ENCODE measurements at regions of chr1 and their contacts with region 1.

Region 1: DNA sequence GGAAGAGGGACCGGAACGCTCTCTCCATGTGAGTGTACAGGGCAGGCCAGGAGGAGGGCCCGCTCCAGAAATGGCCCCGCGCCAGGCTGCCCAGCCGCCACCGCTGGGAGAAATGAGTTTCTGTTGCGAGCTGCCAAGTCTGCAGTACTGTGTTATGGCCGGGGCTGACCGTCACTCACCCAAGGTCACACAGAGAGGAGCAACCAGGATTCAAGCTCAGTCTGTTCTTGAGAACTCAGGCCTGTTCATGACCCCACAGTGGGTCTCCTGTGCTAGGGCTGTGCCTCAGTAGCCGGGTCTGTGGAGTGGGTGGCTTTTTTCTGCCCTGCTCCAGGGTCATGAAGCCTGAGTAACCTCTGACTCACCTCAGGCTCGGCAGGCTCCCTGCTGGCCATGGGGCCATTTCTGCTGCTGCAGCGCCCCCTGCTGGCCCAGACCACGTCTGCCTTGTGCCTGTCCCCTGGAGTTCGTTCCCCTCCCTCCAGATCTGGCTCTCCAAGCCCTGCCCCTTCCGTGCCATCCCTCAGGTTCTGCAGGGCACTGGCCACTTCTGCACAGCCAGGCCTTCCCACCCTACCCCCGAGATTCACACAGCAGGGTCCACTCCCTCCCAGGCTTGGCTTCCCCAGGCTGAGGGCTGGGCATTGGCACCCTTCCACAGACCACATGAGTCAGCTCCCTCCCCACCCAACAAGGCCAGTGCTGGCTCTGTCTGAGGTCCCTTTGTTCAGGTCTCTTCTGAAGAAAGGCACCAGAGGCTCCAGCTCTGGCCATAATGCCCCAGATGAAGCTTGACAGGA is 51.8 kb downstream of the EDN2 start:
- DNase-seq: peak; percentile 93 to 99
- H3K4me3 ChIP-seq: no peak overlapping the region
- H3K27ac ChIP-seq: peak overlapping the region; percentile 13; the same call in 1 of the 2 replicates
- H3K4me1 ChIP-seq: peaks cover 28% of the 10 kb centered on the region
- H3K27me3 ChIP-seq: no peaks in the 10 kb centered on the region
- CTCF ChIP-seq: peak; percentile 97

Region 2: DNA sequence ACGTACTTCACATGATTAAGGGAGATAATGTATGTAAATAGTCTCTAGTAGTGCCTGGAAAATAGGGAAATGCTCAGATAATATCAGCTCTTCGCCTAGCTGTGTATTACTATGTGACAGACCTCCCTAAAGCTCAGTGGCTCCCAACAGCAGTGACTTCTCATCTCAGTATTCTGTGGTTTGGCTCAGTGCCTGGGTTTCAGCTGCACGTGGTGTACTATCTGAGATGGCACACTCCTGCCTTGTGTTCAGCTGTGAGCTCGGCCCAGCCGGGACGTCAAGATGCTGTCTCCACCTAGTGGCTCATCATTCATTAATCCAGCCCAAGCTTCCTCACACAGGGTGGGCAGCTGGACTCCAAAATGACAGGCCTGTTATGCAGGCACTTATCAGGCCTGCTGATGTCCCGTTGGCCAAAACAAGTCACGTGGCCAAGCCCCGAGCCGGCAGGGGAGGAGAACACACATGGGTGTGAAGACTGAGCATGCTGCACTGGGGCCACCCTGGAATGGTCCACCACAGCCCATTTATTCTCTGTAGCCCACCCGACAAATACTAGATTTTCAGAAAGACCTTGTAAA is 429.0 kb before region 1 on chr1:
- CTCF ChIA-PET with region 1: no interaction called
- POLR2A ChIA-PET with region 1: no interaction called
- intact Hi-C with region 1: loop called (anchors 10 kb)
- DNase-seq: peak; percentile 93 to 96
- H3K4me3 ChIP-seq: no peak overlapping the region
- H3K27ac ChIP-seq: no peak overlapping the region
- H3K4me1 ChIP-seq: peaks cover 13% of the 10 kb centered on the region
- H3K27me3 ChIP-seq: no peaks in the 10 kb centered on the region
- CTCF ChIP-seq: peak; percentile 62

Region 3: GRCh38 chr1:41282679-41283317 is 149.9 kb before region 1 on chr1:
- CTCF ChIA-PET with region 1: interaction called, 3 read pairs
- POLR2A ChIA-PET with region 1: no interaction called
- intact Hi-C with region 1: loop called (anchors 2 kb)
- DNase-seq: peak in 1 of 2 experiments; percentile 54
- H3K4me3 ChIP-seq: no peak overlapping the region
- H3K27ac ChIP-seq: no peak overlapping the region
- H3K4me1 ChIP-seq: no peaks in the 10 kb centered on the region; the same call in 1 of the 2 replicates
- H3K27me3 ChIP-seq: peaks cover 6% of the 10 kb centered on the region; the same call in 1 of the 2 replicates
- CTCF ChIP-seq: peak; percentile 87

Region 4: GRCh38 chr1:41416552-41417334 is 15.9 kb before region 1 on chr1:
- CTCF ChIA-PET with region 1: interaction called, 7 read pairs
- POLR2A ChIA-PET with region 1: no interaction called
- intact Hi-C with region 1: loop called (anchors 1 kb)
- DNase-seq: peak; percentile 73 to 81
- H3K4me3 ChIP-seq: no peak overlapping the region
- H3K27ac ChIP-seq: no peak overlapping the region
- H3K4me1 ChIP-seq: peaks cover 39% of the 10 kb centered on the region
- H3K27me3 ChIP-seq: no peaks in the 10 kb centered on the region
- CTCF ChIP-seq: peak; percentile 95

Region 5: GRCh38 chr1:41444246-41444645 is 11.6 kb after region 1 on chr1:
- CTCF ChIA-PET with region 1: no interaction called
- POLR2A ChIA-PET with region 1: no interaction called
- intact Hi-C with region 1: no loop called
- DNase-seq: no peak
- H3K4me3 ChIP-seq: no peak overlapping the region
- H3K27ac ChIP-seq: no peak overlapping the region
- H3K4me1 ChIP-seq: peaks cover 11% of the 10 kb centered on the region; the same call in 1 of the 2 replicates
- H3K27me3 ChIP-seq: no peaks in the 10 kb centered on the region
- CTCF ChIP-seq: peak; percentile 57

Region 6: GRCh38 chr1:41496080-41497055 is 63.7 kb after region 1 on chr1:
- CTCF ChIA-PET with region 1: interaction called, 3 read pairs
- POLR2A ChIA-PET with region 1: interaction called, 4 read pairs
- intact Hi-C with region 1: loop called (anchors 1 kb)
- DNase-seq: peak; percentile 82 to 94
- H3K4me3 ChIP-seq: peak overlapping the region; percentile 49; the same call in 1 of the 2 replicates
- H3K27ac ChIP-seq: peak overlapping the region; percentile 67
- H3K4me1 ChIP-seq: peaks cover 79% of the 10 kb centered on the region
- H3K27me3 ChIP-seq: no peaks in the 10 kb centered on the region
- CTCF ChIP-seq: no peak

Region 7: DNA sequence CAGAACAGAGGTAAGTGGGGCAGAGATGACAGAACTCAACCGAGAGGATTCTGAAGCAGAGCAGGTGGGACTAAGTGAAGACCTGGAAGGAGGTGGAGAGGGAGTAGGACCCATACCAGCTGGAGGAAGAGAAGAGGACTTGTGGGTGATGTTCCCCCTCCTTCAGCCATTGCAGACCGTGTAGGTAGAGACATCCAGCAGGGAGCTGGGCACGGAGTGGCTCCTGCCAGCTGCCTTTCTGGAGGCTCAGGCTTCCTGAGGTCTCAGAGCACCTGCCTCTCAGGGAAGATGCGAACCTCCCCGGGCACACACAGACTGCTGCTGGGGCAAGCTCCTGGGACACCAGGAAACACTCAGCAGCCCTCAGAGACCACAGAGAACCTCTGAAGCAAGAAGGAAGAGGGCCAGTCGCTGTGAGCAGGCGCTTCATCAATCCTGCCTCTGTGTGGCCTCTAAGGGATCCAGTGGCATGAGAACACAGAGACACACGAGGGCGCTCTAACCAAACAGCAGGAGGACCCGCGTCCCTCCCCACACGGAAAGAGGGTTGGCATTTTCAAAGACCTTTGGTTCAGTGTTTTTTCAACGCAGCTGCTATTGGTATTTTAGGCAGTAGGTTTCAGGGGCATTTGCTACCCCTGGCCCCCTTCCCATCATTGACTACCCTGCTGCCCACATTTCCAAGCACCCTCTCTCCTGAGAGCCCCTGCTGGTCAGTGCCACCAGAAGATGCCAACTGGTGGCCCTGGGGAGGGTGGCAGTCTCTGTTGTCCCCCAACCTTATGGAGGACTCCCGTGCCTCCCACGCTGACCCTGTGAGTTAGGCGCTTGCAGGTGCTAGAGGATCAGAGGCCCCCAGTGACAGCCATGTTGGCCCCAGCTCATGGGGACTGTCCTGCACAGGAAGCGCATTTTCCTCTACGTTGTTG is 141.4 kb after region 1 on chr1:
- CTCF ChIA-PET with region 1: interaction called, 3 read pairs
- POLR2A ChIA-PET with region 1: no interaction called
- intact Hi-C with region 1: loop called (anchors 5 kb)
- DNase-seq: peak; percentile 58 to 80
- H3K4me3 ChIP-seq: no peak overlapping the region
- H3K27ac ChIP-seq: no peak overlapping the region
- H3K4me1 ChIP-seq: peaks cover 5% of the 10 kb centered on the region
- H3K27me3 ChIP-seq: no peaks in the 10 kb centered on the region
- CTCF ChIP-seq: peak; percentile 93

Region 8: DNA sequence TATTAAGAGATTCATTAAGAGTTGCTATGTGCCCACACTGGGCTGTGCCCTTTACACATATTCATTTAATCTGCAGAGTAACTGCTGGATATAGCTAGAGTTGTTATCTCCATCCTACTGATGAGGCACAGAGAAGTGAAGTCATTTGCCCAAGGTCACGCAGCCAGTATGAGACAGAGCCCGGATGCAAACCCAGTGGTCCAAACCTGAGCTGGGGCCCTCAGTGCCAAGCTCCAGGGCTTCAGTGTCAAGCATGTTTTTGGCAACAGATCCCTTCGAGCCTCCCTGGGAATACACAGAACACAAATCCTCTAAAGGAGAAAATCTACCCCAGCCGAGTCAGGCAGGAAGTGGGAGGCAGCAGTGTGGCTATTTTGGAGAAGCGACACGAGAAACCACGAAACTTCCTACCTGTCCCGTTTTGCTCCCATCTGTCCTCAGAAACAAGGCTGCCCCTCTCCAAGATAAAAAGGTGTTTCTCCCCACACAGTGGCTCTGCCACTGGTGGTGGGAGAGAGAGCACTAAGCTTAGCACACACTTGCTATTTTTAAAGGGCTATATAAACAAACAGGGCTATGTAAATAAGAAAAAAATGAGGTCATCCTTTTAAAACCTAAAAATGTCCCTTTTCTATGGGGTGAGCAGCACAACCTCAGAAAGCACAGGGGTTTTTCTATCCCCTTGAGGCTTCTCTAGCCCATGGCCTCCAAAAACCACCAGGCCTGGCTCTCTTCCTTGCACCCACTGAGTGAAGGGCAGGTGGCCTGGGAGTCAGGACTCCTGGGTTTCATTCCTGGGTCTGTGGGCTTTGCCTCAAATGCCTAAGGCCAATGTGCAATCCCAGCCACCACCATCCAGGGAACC is 190.4 kb after region 1 on chr1:
- CTCF ChIA-PET with region 1: no interaction called
- POLR2A ChIA-PET with region 1: no interaction called
- intact Hi-C with region 1: no loop called
- DNase-seq: no peak
- H3K4me3 ChIP-seq: no peak overlapping the region
- H3K27ac ChIP-seq: no peak overlapping the region
- H3K4me1 ChIP-seq: peaks cover 26% of the 10 kb centered on the region
- H3K27me3 ChIP-seq: no peaks in the 10 kb centered on the region
- CTCF ChIP-seq: no peak